Activated B cell treated with CpG ODN at 0.5 μM for 24 hours (primary cell): ENCODE measurements at regions of chr1 and their contacts with region 1.

Region 1: GRCh38 chr1:45303582-45304310 is 22.9 kb upstream of the HPDL start:
- DNase-seq: peak; percentile 91
- ATAC-seq: peak; percentile 80
- H3K4me3 Mint-ChIP-seq: peak overlapping the region; percentile 92
- H3K27ac Mint-ChIP-seq: peak overlapping the region; percentile 96
- H3K4me1 Mint-ChIP-seq: peaks cover 43% of the 10 kb centered on the region
- H3K27me3 Mint-ChIP-seq: no peaks in the 10 kb centered on the region
- CTCF ChIP-seq: no peak

Region 2: GRCh38 chr1:44631647-44632539 is 671.9 kb before region 1 on chr1:
- CTCF ChIA-PET with region 1: no interaction called
- POLR2A ChIA-PET with region 1: interaction called, 9 read pairs
- intact Hi-C with region 1: loop called (anchors 1 kb)
- DNase-seq: peak; percentile 92
- ATAC-seq: peak; percentile 76
- H3K4me3 Mint-ChIP-seq: peak overlapping the region; percentile 91
- H3K27ac Mint-ChIP-seq: peak overlapping the region; percentile 98
- H3K4me1 Mint-ChIP-seq: peaks cover 38% of the 10 kb centered on the region
- H3K27me3 Mint-ChIP-seq: no peaks in the 10 kb centered on the region
- CTCF ChIP-seq: no peak

Region 3: DNA sequence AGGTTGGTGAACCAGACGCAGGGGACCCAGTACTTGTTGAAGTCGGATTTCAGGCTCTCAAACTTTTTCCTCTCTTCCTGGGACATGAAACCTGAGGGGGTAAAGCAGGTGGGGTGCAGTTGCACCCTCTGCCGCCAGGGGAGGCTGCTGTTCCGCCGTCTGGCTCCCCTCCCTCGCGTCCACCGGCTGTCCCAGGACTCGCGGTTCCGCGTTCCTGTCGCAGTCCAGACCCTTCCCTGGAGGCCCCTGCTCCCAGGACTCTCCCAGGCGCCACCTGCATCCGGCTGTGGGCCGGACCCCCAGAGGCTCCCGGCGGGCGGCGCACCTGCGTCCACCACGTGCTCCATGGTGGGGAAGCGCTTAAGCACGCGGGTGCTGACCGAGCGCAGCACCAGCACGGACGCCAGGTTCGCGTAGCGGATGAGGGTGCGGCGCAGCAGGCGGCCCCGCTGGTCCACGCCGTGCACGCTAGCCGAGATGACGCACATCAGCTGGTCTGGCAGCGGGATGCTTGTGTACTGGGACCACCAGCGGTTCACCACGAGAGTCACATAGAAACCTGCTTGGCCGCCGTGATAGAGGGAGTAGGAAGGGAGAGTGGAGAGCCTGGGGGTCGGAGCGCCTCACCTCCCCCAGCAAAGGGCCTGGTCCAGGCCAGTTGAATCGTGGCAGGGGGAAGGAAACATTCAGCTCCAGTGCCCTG is 517.5 kb before region 1 on chr1:
- CTCF ChIA-PET with region 1: interaction called, 4 read pairs
- POLR2A ChIA-PET with region 1: interaction called, 8 read pairs
- intact Hi-C with region 1: loop called (anchors 2 kb)
- DNase-seq: peak; percentile 81
- ATAC-seq: peak; percentile 79
- H3K4me3 Mint-ChIP-seq: peak overlapping the region; percentile 75
- H3K27ac Mint-ChIP-seq: peak overlapping the region; percentile 86
- H3K4me1 Mint-ChIP-seq: peaks cover 32% of the 10 kb centered on the region
- H3K27me3 Mint-ChIP-seq: no peaks in the 10 kb centered on the region
- CTCF ChIP-seq: peak; percentile 100

Region 4: GRCh38 chr1:44819608-44820327 is 484.0 kb before region 1 on chr1:
- CTCF ChIA-PET with region 1: no interaction called
- POLR2A ChIA-PET with region 1: interaction called, 27 read pairs
- intact Hi-C with region 1: loop called (anchors 5 kb)
- DNase-seq: peak; percentile 80
- ATAC-seq: peak; percentile 85
- H3K4me3 Mint-ChIP-seq: peak overlapping the region; percentile 88
- H3K27ac Mint-ChIP-seq: peak overlapping the region; percentile 100
- H3K4me1 Mint-ChIP-seq: peaks cover 35% of the 10 kb centered on the region
- H3K27me3 Mint-ChIP-seq: no peaks in the 10 kb centered on the region
- CTCF ChIP-seq: no peak

Region 5: DNA sequence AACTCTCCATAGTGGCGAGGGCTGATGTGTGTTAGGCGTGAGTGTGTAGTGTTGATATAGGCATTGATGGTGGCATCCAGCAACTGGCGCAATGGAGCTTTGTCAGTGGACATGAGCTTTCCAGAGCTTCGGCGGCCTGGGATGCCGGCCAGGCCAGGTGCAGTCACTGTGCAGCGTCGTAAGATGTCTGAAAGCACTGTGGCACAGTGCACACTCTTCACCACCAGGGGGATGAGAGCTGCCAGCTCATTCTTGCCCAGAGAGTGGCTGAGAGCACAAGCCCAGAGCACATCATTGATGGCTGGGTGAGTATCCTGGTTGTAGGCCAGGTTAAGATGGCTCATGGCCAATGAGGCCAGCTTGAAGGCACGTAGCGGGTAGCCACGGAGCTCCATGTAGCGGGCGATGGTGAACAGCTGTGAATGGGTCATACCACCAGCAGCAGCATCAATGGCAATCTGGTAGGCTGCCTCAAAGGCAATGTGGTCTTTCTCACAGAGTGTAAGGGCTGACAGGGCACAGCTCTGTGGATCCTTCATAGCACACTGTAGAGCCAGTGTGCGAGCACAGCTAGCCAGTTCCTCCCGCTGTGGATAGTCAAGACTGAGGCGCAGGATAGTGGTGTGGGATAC is 285.0 kb before region 1 on chr1:
- CTCF ChIA-PET with region 1: interaction called, 227 read pairs
- POLR2A ChIA-PET with region 1: interaction called, 156 read pairs
- intact Hi-C with region 1: loop called (anchors 1 kb)
- DNase-seq: no peak
- ATAC-seq: peak; percentile 81
- H3K4me3 Mint-ChIP-seq: no peak overlapping the region
- H3K27ac Mint-ChIP-seq: no peak overlapping the region
- H3K4me1 Mint-ChIP-seq: peaks cover 11% of the 10 kb centered on the region
- H3K27me3 Mint-ChIP-seq: no peaks in the 10 kb centered on the region
- CTCF ChIP-seq: no peak

Region 6: DNA sequence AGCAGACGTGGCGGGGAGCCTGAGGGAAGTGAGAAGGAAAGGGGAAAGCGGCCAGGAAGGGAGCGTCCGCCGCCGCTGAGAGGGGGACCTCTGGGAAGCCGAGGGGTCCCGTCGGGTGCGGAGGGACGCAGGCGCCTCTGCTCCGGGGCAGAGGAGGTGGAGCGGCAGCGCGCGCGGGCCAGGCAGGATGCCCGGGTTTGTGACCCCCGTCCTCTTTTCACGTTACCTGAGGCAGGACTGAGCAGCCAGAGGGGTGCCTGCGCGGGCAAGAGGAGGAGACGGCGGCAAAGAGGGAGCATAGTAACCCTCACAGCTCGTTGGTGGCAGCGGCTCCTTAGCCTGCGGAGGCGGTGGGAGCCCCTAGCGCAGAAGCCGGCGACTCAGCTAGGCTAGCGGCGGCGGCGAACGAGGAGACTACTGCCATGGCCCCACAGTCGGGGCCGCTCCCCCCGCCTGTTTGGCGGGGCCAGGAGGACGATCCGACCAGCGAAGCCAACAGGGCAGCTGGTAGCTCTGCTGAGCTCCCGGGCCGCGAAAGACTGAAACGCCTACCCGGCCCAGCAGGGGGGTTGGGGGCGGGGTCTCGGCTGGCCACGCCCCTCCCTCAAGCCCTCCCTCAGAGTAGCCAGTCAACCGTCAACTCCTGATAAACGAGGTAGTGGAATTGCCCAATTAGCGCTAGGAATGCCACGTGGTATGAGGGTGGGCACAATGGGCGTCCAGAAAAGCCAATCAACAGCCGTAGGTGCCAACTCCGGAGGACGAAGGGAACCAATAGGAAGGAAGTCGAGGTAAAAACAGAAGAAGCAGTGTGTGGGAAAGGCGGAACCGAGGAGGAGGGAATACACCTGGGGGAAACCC is 187.1 kb after region 1 on chr1 and contains the start of gene TESK2:
- CTCF ChIA-PET with region 1: interaction called, 33 read pairs
- POLR2A ChIA-PET with region 1: interaction called, 77 read pairs
- intact Hi-C with region 1: loop called (anchors 1 kb)
- DNase-seq: peak; percentile 95
- ATAC-seq: peak; percentile 89
- H3K4me3 Mint-ChIP-seq: no peak within 1 kb of the TSS
- H3K27ac Mint-ChIP-seq: no peak within 1 kb of the TSS
- H3K4me1 Mint-ChIP-seq: peaks cover 12% of the 10 kb centered on the region
- H3K27me3 Mint-ChIP-seq: no peaks in the 10 kb centered on the region
- CTCF ChIP-seq: no peak
- total RNA-seq, gene TESK2: 11.7 and 12.2 TPM in 2 replicates

Region 7: GRCh38 chr1:45583264-45583665 is 279.5 kb after region 1 on chr1:
- CTCF ChIA-PET with region 1: no interaction called
- POLR2A ChIA-PET with region 1: interaction called, 22 read pairs
- intact Hi-C with region 1: loop called (anchors 1 kb)
- DNase-seq: peak; percentile 84
- ATAC-seq: peak; percentile 79
- H3K4me3 Mint-ChIP-seq: peak overlapping the region; percentile 98
- H3K27ac Mint-ChIP-seq: peak overlapping the region; percentile 96
- H3K4me1 Mint-ChIP-seq: peaks cover 46% of the 10 kb centered on the region
- H3K27me3 Mint-ChIP-seq: no peaks in the 10 kb centered on the region
- CTCF ChIP-seq: no peak